ENCODE measurements at regions of chr17 and their contacts with region 1.

Region 1: DNA sequence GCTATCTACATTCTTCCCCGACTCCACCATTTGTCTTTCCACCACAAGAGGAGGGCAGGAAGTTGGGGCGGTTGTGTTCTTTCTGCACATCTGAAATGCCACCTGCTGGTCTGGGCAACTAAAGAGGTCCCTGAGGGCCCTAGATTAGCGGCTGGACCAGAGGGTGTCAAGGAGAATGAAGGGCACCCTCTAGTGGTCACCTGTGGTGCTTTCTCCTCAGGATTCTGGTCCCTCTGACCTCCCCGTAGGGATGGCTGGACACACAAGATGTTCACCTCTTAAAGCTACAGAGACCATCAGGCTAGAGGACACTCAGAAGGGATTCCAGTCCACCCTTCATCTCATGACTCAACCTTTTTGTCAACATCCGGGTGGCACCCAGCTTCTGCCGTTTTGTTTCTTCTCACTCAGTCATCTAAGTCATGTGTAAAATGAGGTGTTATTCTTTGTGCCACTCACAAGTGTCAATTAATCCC is 2.9 kb upstream of the SCIMP start:
- DNase-seq: peak; percentile 60
- ATAC-seq: peak; percentile 90
- H3K4me3 ChIP-seq: no peak overlapping the region
- H3K27ac ChIP-seq: no peak overlapping the region
- H3K4me1 ChIP-seq: peaks cover 5% of the 10 kb centered on the region; the same call in 1 of the 2 replicates
- H3K27me3 ChIP-seq: no peaks in the 10 kb centered on the region
- CTCF ChIP-seq: peak; percentile 68

Region 2: DNA sequence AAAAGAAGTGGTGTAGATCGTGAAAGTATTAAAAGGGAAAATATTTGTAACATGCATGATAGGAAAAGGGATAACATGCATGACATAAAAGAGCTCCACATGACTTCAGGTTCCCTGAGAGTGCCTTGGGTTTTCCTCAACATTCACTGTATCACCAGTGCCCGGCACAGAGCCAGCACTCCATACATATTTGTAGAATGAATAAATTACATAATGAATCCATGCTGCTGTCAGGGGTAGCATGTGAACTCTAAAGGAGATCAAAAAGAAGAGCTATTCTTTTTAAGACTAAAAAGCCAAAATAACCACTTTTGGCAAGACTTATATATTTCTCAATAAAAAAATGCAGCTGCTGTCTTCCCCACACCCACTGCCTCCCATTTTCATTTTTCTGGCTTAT is 43.2 kb before region 1 on chr17:
- CTCF ChIA-PET with region 1: no interaction called
- POLR2A ChIA-PET with region 1: no interaction called
- intact Hi-C with region 1: loop called (anchors 1 kb)
- DNase-seq: no peak
- ATAC-seq: no peak
- H3K4me3 ChIP-seq: no peak overlapping the region
- H3K27ac ChIP-seq: no peak overlapping the region
- H3K4me1 ChIP-seq: peaks cover 7% of the 10 kb centered on the region; the same call in 1 of the 2 replicates
- H3K27me3 ChIP-seq: no peaks in the 10 kb centered on the region
- CTCF ChIP-seq: no peak

Measured in PC-3 (cell line).